Activated CD8-positive, alpha-beta T cell treated with anti-CD3 and anti-CD28 coated beads, Interleukin-2, amount 10 ng/mL, durations not matched to agents 7 days and 5 days (primary cell): ENCODE measurements at regions of chr14 and their contacts with region 1.

Region 1: DNA sequence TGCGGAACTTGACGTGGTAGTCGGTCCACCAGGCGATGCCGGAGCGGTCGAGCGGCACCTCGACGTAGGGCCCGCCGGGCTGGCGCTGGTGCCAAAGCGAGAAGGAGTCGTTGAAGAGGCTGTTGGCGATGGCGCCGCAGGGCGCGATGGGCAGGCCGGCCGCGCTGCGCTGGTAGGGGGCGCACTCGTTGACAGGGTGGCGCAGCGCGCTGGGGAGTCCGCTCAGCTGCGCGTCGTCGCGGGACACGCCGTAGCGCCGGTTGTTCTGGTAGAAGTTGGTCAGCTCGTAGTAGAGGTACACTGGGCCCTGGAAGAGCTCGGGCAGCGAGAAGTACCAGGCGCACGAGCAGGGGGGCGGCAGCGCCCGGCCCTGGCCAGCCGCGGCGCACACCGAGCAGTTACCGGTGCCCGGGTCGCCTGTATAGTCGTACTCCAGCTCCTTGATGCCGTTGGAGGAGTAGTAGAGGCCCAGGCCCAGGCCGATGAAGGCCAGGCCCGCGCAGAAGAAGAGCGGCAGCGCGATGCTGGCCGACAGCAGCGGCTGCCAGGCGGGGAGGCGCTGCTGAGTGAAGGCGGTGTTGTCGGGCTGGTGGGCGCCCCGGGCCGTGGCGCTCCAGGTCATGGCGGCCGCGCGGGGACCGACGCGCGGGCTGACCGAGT is 482 bp downstream of the TMEM30B start:
- DNase-seq: peak; percentile 77
- ATAC-seq: peak; percentile 90
- H3K4me3 Mint-ChIP-seq: peak overlapping the region; percentile 87
- H3K27ac Mint-ChIP-seq: peak overlapping the region; percentile 77
- H3K4me1 Mint-ChIP-seq: peaks cover 35% of the 10 kb centered on the region
- H3K27me3 Mint-ChIP-seq: peaks cover 27% of the 10 kb centered on the region

Region 2: GRCh38 chr14:61090432-61091216 is 190.0 kb before region 1 on chr14:
- CTCF ChIA-PET with region 1: no interaction called
- POLR2A ChIA-PET with region 1: no interaction called
- DNase-seq: no peak
- ATAC-seq: no peak
- H3K4me3 Mint-ChIP-seq: no peak overlapping the region
- H3K27ac Mint-ChIP-seq: no peak overlapping the region
- H3K4me1 Mint-ChIP-seq: no peaks in the 10 kb centered on the region
- H3K27me3 Mint-ChIP-seq: no peaks in the 10 kb centered on the region

Region 3: GRCh38 chr14:61269321-61270083 is 11.2 kb before region 1 on chr14:
- CTCF ChIA-PET with region 1: interaction called, 94 read pairs
- POLR2A ChIA-PET with region 1: interaction called, 3 read pairs
- DNase-seq: peak; percentile 88
- ATAC-seq: peak; percentile 91
- H3K4me3 Mint-ChIP-seq: peak overlapping the region; percentile 68
- H3K27ac Mint-ChIP-seq: no peak overlapping the region
- H3K4me1 Mint-ChIP-seq: peaks cover 7% of the 10 kb centered on the region
- H3K27me3 Mint-ChIP-seq: peaks cover 52% of the 10 kb centered on the region

Region 4: DNA sequence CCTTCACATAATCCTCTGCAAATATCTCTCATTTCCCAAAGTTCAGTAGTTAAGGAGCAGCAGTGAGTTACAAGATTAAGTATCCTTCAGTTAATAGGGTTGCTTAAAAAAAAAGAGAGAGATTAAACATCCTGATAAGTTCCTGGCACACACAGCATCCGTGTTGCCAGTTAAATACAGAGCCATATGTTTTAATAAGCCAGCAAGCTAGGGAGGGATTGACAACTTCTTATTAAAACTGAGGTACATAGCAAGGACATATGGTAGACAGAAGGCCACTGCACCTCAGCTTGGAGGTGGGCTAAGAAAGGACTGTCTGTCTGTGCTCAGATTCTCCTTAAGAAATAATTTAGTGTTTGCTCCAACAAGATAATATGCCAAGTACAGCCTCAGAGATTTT is 10.0 kb after region 1 on chr14:
- CTCF ChIA-PET with region 1: interaction called, 22 read pairs
- POLR2A ChIA-PET with region 1: no interaction called
- DNase-seq: no peak
- ATAC-seq: no peak
- H3K4me3 Mint-ChIP-seq: no peak overlapping the region
- H3K27ac Mint-ChIP-seq: no peak overlapping the region
- H3K4me1 Mint-ChIP-seq: peaks cover 15% of the 10 kb centered on the region
- H3K27me3 Mint-ChIP-seq: no peaks in the 10 kb centered on the region

Region 5: GRCh38 chr14:61296719-61297502 is 16.3 kb after region 1 on chr14:
- CTCF ChIA-PET with region 1: interaction called, 22 read pairs
- POLR2A ChIA-PET with region 1: no interaction called
- DNase-seq: peak; percentile 50
- ATAC-seq: peak; percentile 50
- H3K4me3 Mint-ChIP-seq: peak overlapping the region; percentile 53
- H3K27ac Mint-ChIP-seq: no peak overlapping the region
- H3K4me1 Mint-ChIP-seq: peaks cover 47% of the 10 kb centered on the region
- H3K27me3 Mint-ChIP-seq: no peaks in the 10 kb centered on the region